ENCODE measurements at regions of chrX and their contacts with region 1.

Region 1: GRCh38 chrX:150772150-150772970 is 79.2 kb downstream of the MTMR1 start:
- DNase-seq: peak; percentile 60 to 77
- H3K4me3 ChIP-seq: no peak overlapping the region
- H3K27ac ChIP-seq: no peak overlapping the region
- H3K4me1 ChIP-seq: peaks cover 0 to 4% (median 0%) of the 10 kb centered on the region in 4 donors
- H3K27me3 ChIP-seq: no peaks in the 10 kb centered on the region
- CTCF ChIP-seq: peak; percentile 69 to 71

Region 2: DNA sequence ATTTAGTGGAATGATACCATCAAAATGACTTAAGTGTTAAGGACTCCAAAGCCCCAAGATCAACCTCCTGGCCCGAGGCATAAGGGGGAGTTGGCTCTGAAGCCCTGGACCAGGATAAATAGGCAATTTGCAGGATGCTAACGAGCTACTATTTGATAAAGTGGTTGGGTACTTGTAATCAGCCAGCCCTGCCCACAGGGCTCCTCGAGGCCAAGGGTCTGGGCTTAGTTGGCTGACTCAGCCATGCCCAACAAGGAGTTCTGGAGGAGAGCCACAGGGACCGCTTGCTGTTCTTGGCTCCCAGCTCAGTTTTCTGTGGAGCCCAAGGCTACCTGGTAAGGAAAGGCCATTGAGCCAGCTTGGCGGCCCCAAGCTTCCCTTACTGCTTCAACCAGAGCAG is 218.5 kb after region 1 on chrX:
- intact Hi-C with region 1: loop called (anchors 10 kb)
- DNase-seq: no peak
- H3K4me3 ChIP-seq: no peak overlapping the region
- H3K27ac ChIP-seq: no peak overlapping the region
- H3K4me1 ChIP-seq: no peaks in the 10 kb centered on the region
- H3K27me3 ChIP-seq: no peaks in the 10 kb centered on the region
- CTCF ChIP-seq: no peak

Region 3: GRCh38 chrX:151082076-151082948 is 310.0 kb after region 1 on chrX:
- intact Hi-C with region 1: loop called (anchors 5 kb)
- DNase-seq: peak; percentile 56 to 69
- H3K4me3 ChIP-seq: peak overlapping the region in 1 of 2 donors; percentile 33
- H3K27ac ChIP-seq: no peak overlapping the region
- H3K4me1 ChIP-seq: peaks cover 0 to 5% (median 0%) of the 10 kb centered on the region in 4 donors
- H3K27me3 ChIP-seq: no peaks in the 10 kb centered on the region
- CTCF ChIP-seq: peak; percentile 76 to 83